ENCODE measurements at regions of chr3 and their contacts with region 1.

Region 1: GRCh38 chr3:132034486-132035464 is at the start of gene CPNE4:
- DNase-seq: peak; percentile 72 to 85 (median 79)
- ATAC-seq: peak; percentile 85 to 98 (median 96)
- H3K4me3 ChIP-seq: peak within 1 kb of the TSS in 7 of 12 donors; percentile 8 to 26 (median 20)
- H3K27ac ChIP-seq: no peak within 1 kb of the TSS
- H3K4me1 ChIP-seq: peaks cover 0 to 13% (median 0%) of the 10 kb centered on the region in 12 donors
- H3K27me3 ChIP-seq: peaks cover 12 to 64% (median 46%) of the 10 kb centered on the region in 9 donors
- CTCF ChIP-seq: peak; percentile 52 to 75 (median 62)
- POLR2A ChIP-seq: no peak
- total RNA-seq, gene CPNE4: 6.6 to 99.7 (median 28.2) TPM

Region 2: GRCh38 chr3:131026321-131027178 is 1008.2 kb before region 1 on chr3 and contains the starts of genes ASTE1 and NEK11:
- intact Hi-C with region 1: loop called in 1 of 10 experiments (anchors 10 kb)
- DNase-seq: peak; percentile 89 to 95 (median 92)
- ATAC-seq: peak; percentile 95 to 99 (median 99)
- H3K4me3 ChIP-seq: peak within 1 kb of the TSS; percentile 58 to 90 (median 68)
- H3K27ac ChIP-seq: peak within 1 kb of the TSS; percentile 57 to 93 (median 84)
- H3K4me1 ChIP-seq: peaks cover 0 to 50% (median 20%) of the 10 kb centered on the region in 12 donors
- H3K27me3 ChIP-seq: no peaks in the 10 kb centered on the region
- CTCF ChIP-seq: no peak
- POLR2A ChIP-seq: peak in 1 of 2 donors; percentile 51
- total RNA-seq, gene ASTE1: 1.9 to 5.7 (median 3.1) TPM
- total RNA-seq, gene NEK11: 1.5 to 4.3 (median 2.1) TPM

Region 3: GRCh38 chr3:131535596-131535995 is 499.2 kb before region 1 on chr3:
- intact Hi-C with region 1: loop called in 2 of 10 experiments (anchors 10 kb)
- DNase-seq: no peak
- ATAC-seq: no peak
- H3K4me3 ChIP-seq: no peak overlapping the region
- H3K27ac ChIP-seq: no peak overlapping the region
- H3K4me1 ChIP-seq: no peaks in the 10 kb centered on the region
- H3K27me3 ChIP-seq: no peaks in the 10 kb centered on the region
- CTCF ChIP-seq: no peak
- POLR2A ChIP-seq: no peak

Region 4: DNA sequence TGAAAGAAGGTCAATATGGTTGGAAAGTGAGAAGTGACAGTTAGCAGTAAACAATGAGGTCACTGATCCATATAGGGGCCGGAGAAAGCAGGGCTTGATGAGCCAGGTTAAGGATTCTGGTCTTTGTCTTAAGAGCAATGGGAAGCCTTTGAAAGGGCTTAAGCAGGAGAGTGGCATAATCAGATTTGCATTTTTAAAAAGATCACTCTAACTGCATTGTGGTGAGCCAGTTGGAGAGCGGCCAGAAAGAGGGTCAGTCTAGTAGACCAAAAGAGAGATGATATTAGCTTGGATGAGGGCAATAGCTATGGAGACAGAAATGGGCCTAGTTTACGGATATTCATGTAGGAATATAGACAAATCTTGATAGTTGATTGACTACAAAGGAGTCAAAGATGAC is 46.6 kb before region 1 on chr3:
- intact Hi-C with region 1: no loop called
- DNase-seq: no peak
- ATAC-seq: no peak
- H3K4me3 ChIP-seq: no peak overlapping the region
- H3K27ac ChIP-seq: no peak overlapping the region
- H3K4me1 ChIP-seq: no peaks in the 10 kb centered on the region
- H3K27me3 ChIP-seq: peaks cover 0 to 6% (median 0%) of the 10 kb centered on the region in 9 donors
- CTCF ChIP-seq: no peak
- POLR2A ChIP-seq: no peak

Region 5: GRCh38 chr3:132071043-132071442 is 36.3 kb after region 1 on chr3:
- intact Hi-C with region 1: no loop called
- DNase-seq: no peak
- ATAC-seq: no peak
- H3K4me3 ChIP-seq: no peak overlapping the region
- H3K27ac ChIP-seq: no peak overlapping the region
- H3K4me1 ChIP-seq: no peaks in the 10 kb centered on the region
- H3K27me3 ChIP-seq: no peaks in the 10 kb centered on the region
- CTCF ChIP-seq: no peak
- POLR2A ChIP-seq: no peak

Region 6: GRCh38 chr3:132174500-132174899 is 139.7 kb after region 1 on chr3:
- intact Hi-C with region 1: loop called in 2 of 10 experiments (anchors 5 to 10 kb)
- DNase-seq: no peak
- ATAC-seq: no peak
- H3K4me3 ChIP-seq: no peak overlapping the region
- H3K27ac ChIP-seq: no peak overlapping the region
- H3K4me1 ChIP-seq: no peaks in the 10 kb centered on the region
- H3K27me3 ChIP-seq: peaks cover 0 to 13% (median 0%) of the 10 kb centered on the region in 9 donors
- CTCF ChIP-seq: no peak
- POLR2A ChIP-seq: no peak

Region 7: DNA sequence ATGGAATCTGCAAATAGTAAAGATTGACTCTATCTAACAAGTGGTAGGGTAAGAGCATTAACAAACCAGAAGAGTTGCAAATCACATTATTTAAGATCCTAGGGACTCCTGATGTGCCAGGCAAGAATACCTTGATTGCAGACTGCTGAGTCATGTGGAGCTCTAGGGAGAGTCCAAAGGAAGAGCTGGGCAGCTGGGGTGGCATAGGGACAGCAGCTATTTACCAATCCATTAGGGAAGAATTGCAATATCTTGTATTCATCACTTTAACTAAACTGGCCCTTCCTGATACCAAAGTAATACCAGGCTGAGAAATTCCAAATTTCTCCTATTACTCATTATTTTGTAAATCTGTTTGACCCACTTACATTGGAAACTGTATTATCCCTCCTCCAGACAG is 230.3 kb after region 1 on chr3:
- intact Hi-C with region 1: no loop called
- DNase-seq: no peak
- ATAC-seq: no peak
- H3K4me3 ChIP-seq: no peak overlapping the region
- H3K27ac ChIP-seq: no peak overlapping the region
- H3K4me1 ChIP-seq: no peaks in the 10 kb centered on the region
- H3K27me3 ChIP-seq: no peaks in the 10 kb centered on the region
- CTCF ChIP-seq: no peak
- POLR2A ChIP-seq: no peak

Region 8: DNA sequence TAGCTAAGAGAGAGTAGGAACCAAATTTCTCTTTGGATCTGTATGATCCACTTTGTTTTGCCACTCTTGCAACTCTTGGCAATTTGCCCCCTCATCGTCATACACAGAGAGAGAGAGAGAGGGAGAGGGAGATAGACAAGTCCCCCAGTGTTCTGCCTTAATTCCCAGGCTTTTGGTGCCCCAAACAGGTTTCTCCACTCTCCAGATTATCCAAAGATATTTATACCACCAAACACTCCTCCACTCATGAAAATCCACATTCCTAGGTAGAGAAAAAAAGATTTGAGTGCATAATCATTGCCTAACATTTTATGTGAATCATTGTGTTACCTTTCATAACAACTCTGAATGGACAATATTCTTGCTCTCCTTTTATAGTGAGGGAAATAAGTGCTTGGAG is 297.7 kb after region 1 on chr3:
- intact Hi-C with region 1: loop called in 1 of 10 experiments (anchors 10 kb)
- DNase-seq: no peak
- ATAC-seq: no peak
- H3K4me3 ChIP-seq: no peak overlapping the region
- H3K27ac ChIP-seq: no peak overlapping the region
- H3K4me1 ChIP-seq: no peaks in the 10 kb centered on the region
- H3K27me3 ChIP-seq: peaks cover 0 to 6% (median 0%) of the 10 kb centered on the region in 9 donors
- CTCF ChIP-seq: no peak
- POLR2A ChIP-seq: no peak

Measured in heart left ventricle (tissue), 16 donors.